OCI-LY7 (cell line): ENCODE measurements at regions of chr10 and their contacts with region 1.

Region 1: DNA sequence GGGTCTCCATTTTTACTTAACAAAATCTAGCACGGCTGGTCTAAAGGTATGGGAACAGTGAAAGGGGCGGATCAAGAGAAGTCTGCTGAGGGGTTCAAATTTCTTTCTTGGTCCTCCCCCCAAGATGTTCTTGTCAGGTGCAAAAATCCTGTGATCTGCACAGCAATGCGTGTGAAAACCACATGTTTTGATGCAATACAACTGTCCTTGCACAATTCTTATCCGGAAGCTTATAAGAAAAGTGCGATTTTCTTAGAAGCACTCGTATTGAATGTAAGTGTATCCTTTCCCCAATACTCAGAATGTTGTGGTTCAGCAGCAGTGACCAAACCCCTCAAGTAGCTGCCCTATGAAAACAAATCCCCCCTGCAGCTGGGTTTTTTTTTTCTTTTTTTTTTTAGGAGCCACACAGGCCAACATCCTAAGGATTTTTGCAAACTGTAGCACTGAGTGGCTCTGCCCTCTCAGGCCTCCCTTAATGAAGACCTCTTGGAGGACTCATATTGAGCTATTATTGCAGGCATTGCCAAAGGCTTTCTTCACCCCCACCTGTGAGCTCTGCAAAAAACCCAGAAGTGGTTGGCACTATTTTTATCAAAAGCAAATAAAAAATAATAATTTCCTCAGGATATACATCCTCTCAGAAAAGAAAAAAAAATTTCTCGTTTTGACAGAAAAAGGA is 151.9 kb upstream of the ITGB1 start:
- DNase-seq: peak; percentile 37
- H3K4me3 ChIP-seq: peak overlapping the region; percentile 14
- H3K27ac ChIP-seq: no peak overlapping the region
- H3K4me1 ChIP-seq: peaks cover 82% of the 10 kb centered on the region
- CTCF ChIP-seq: no peak

Region 2: DNA sequence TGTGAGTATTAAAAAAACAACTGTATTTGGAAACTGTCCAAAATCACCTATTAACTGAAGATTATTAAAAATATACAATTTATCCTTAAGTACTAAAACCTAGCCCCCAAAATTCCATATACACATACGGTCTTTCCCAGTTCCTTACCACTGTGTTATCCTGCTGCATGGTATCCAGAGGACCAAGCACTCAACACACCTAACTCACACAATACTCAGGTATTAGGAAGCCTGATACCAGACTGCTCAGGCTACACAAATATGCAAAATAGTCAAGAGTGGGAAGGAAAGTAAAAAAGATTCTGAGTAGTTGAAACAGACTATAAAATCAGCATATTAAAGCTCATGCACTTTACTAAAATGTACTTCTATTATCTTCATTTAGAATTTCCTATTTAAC is 830.1 kb before region 1 on chr10:
- CTCF ChIA-PET with region 1: no interaction called
- POLR2A ChIA-PET with region 1: no interaction called
- intact Hi-C with region 1: no loop called
- DNase-seq: no peak
- H3K4me3 ChIP-seq: no peak overlapping the region
- H3K27ac ChIP-seq: no peak overlapping the region
- H3K4me1 ChIP-seq: no peaks in the 10 kb centered on the region
- CTCF ChIP-seq: no peak

Region 3: DNA sequence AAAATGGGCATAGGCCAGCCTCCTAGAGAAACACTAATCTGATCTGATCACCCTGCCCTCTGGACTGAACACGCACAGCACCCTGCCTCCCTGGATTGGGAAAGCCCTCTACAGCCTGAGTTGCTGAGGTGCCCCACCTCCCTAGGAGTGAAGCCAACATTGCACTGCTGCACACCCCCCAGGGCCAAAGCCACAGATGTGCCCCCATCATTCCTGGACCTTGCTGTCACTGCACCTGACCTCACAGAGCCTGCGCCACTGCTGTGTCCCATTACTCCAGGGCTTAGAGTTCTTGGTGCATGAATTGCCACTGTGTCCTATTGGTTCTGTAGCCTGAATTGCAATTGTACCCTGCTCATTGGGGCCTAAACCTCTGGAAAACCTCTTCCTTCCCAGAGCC is 253.5 kb before region 1 on chr10:
- CTCF ChIA-PET with region 1: no interaction called
- POLR2A ChIA-PET with region 1: no interaction called
- intact Hi-C with region 1: no loop called
- DNase-seq: no peak
- H3K4me3 ChIP-seq: no peak overlapping the region
- H3K27ac ChIP-seq: no peak overlapping the region
- H3K4me1 ChIP-seq: no peaks in the 10 kb centered on the region
- CTCF ChIP-seq: no peak

Region 4: GRCh38 chr10:33125522-33126517 is 15.9 kb after region 1 on chr10:
- CTCF ChIA-PET with region 1: interaction called, 3 read pairs
- POLR2A ChIA-PET with region 1: interaction called, 10 read pairs
- intact Hi-C with region 1: no loop called
- DNase-seq: peak; percentile 64
- H3K4me3 ChIP-seq: no peak overlapping the region
- H3K27ac ChIP-seq: peak overlapping the region; percentile 39
- H3K4me1 ChIP-seq: peaks cover 24% of the 10 kb centered on the region
- CTCF ChIP-seq: no peak

Region 5: GRCh38 chr10:33204049-33204448 is 94.1 kb after region 1 on chr10:
- CTCF ChIA-PET with region 1: no interaction called
- POLR2A ChIA-PET with region 1: no interaction called
- intact Hi-C with region 1: no loop called
- DNase-seq: no peak
- H3K4me3 ChIP-seq: no peak overlapping the region
- H3K27ac ChIP-seq: no peak overlapping the region
- H3K4me1 ChIP-seq: no peaks in the 10 kb centered on the region
- CTCF ChIP-seq: no peak

Region 6: DNA sequence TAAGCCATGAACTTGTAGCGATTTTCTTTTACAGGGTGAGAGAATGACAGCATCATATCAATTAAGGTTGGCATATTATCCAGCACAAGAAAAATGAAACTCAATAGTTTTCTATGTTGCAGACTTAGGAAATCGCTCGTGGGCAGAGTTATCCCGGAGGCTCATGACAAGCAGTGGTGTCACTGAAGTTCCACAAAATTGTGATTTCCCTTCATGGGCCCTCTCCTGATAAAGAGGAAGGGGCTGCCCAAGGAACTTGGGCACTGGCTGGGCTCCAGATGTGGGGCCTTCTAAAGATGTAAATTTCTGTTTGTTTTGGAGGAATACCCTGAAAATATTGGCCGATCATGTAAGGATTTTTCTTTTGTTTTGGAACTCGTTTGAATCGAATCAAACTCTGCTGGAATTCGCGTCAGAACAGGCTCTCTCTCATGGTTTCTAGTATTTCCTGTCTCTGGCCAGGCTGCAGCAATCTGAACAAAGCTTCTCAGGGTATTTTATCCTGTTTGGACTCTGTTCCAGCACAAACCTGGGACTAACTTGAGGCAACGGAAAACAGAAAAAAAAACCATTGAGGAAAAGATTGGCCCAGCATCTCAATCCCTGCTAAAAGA is 565.2 kb after region 1 on chr10:
- CTCF ChIA-PET with region 1: no interaction called
- POLR2A ChIA-PET with region 1: no interaction called
- intact Hi-C with region 1: no loop called
- DNase-seq: no peak
- H3K4me3 ChIP-seq: no peak overlapping the region
- H3K27ac ChIP-seq: no peak overlapping the region
- H3K4me1 ChIP-seq: no peaks in the 10 kb centered on the region
- CTCF ChIP-seq: no peak